Adrenal gland (tissue), 19 donors: ENCODE measurements at regions of chr11 and their contacts with region 1.

Region 1: DNA sequence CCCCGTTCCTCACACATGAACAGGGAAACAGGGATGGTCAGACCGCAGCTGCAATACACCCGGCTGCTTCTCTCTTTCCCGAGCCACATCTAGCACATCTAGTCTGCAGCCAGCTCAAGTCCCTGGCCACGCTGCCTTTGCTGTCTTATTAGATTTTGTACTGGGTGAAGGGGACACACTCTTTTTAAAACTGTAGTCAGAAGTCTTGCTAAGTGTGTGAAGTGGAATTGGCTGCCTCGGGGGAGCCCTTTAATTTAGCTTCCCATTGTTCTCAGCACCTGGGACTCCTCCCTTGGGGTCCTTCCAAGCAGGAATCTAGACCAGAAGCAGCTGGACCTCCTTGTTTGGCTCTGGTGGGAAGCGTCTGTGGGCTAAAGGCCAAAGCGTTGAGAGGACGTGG is 420.0 kb downstream of the CTTN start:
- DNase-seq: no peak
- H3K4me3 ChIP-seq: no peak overlapping the region
- H3K27ac ChIP-seq: no peak overlapping the region
- H3K4me1 ChIP-seq: no peaks in the 10 kb centered on the region
- H3K27me3 ChIP-seq: no peaks in the 10 kb centered on the region
- CTCF ChIP-seq: no peak
- POLR2A ChIP-seq: no peak

Region 2: DNA sequence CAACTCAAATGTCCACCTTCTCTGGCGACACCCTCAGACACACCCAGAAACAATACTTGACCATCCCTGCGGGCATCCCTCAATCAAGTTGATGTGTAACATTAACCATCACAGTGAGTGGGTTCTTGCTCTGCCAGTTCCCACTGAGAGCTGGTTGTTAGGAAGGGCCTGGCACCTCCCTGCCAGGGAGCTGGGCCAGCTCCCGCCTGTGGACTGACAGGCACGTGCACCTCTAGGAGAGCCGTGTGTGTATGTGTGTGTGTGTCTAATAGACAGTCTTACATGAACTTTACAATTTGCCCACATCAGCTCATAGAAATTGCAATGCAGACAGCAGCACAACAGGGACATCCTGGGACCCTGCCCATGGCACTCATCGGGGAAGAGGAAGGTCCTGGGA is 135.4 kb after region 1 on chr11:
- intact Hi-C with region 1: no loop called
- DNase-seq: no peak
- H3K4me3 ChIP-seq: no peak overlapping the region
- H3K27ac ChIP-seq: no peak overlapping the region
- H3K4me1 ChIP-seq: no peaks in the 10 kb centered on the region
- H3K27me3 ChIP-seq: no peaks in the 10 kb centered on the region
- CTCF ChIP-seq: no peak
- POLR2A ChIP-seq: no peak

Region 3: DNA sequence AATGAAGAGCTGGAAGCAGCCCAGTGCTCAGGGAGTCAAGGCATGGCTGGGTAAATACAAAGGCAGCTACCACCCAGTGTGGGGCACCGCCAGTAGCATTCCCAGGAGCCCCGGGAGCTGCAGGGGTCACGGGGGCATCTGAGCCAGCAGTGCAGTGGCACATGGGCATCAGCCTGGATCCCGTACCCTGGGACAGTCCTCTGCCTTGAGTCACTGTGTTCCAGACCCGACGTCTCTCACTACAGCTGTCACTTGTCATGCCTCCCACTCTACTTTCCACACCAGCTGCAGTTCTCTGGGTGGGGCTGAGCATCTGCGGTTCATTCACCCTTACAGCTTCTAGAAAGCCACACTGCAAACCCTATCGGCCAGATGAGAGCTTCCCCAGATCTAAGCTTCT is 600.3 kb after region 1 on chr11:
- intact Hi-C with region 1: loop called in 1 of 2 experiments (anchors 10 kb)
- DNase-seq: no peak
- H3K4me3 ChIP-seq: no peak overlapping the region
- H3K27ac ChIP-seq: no peak overlapping the region
- H3K4me1 ChIP-seq: no peaks in the 10 kb centered on the region
- H3K27me3 ChIP-seq: no peaks in the 10 kb centered on the region
- CTCF ChIP-seq: no peak
- POLR2A ChIP-seq: no peak